A549 (cell line): ENCODE measurements at regions of chrX and their contacts with region 1.

Region 1: GRCh38 chrX:153927922-153928760 is 2.1 kb upstream of the ARHGAP4 start:
- DNase-seq: peak; percentile 98 to 99
- ATAC-seq: peak; percentile 88 to 95
- H3K4me3 ChIP-seq: peak overlapping the region; percentile 84
- H3K27ac ChIP-seq: peak overlapping the region; percentile 96 to 99
- H3K4me1 ChIP-seq: peaks cover 17% of the 10 kb centered on the region
- CTCF ChIP-seq: peak; percentile 26
- EP300 ChIP-seq: no peak
- POLR2A ChIP-seq: peak; percentile 50
- RAD21 ChIP-seq: no peak

Region 2: DNA sequence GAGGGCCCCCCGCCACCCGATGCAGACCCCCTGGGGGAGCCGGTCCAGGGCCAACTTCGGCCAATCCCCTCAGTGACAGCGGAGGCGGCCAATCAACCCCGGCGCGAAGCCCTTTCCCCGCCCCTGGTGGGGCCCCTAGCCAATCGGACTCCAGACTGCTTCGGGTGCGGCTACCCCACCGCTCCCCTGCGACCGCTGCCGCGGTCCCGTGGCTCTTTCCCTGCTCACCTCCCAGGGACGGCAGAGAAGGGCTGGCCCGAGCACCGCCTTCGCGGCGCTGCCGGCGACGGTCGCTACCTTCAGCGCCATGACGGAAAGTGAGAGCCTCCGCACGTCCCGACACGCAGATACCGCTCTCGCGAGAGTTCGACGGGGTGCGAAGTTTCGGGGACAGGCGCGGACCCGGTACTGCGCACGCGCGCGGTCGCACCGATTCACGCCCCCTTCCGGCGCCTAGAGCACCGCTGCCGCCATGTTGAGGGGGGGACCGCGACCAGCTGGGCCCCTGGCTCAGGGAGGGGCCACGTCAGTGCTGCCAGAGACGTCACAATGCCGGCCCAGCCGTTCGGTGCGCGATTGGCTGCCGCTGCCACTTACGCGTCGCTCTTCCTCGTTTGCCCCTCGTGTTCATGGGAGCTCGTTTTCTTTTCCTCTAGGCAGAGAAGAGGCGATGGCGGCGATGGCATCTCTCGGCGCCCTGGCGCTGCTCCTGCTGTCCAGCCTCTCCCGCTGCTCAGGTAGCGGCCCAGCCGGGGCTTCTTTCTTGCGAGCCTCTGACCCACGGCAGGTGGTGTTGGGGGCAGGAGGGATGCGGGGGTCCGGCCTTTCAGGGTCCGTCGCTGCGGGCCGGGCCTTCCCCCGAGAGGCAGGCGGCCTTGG is 133.9 kb before region 1 on chrX and contains the starts of genes IDH3G and SSR4:
- CTCF ChIA-PET with region 1: no interaction called
- POLR2A ChIA-PET with region 1: interaction called, 12 read pairs
- DNase-seq: peak; percentile 96 to 97
- ATAC-seq: peak; percentile 92 to 95
- H3K4me3 ChIP-seq: peak within 1 kb of the TSS; percentile 79
- H3K27ac ChIP-seq: peak within 1 kb of the TSS; percentile 92 to 98
- H3K4me1 ChIP-seq: peaks cover 15% of the 10 kb centered on the region; the same call in 2 of the 3 replicates
- CTCF ChIP-seq: no peak
- EP300 ChIP-seq: no peak
- POLR2A ChIP-seq: peak; percentile 64
- RAD21 ChIP-seq: no peak
- polyA plus RNA-seq, gene IDH3G: 45.6 and 50.7 TPM in 2 replicates
- polyA plus RNA-seq, gene SSR4: 212 and 293 TPM in 2 replicates

Region 3: GRCh38 chrX:153909024-153909970 is 18.8 kb before region 1 on chrX:
- CTCF ChIA-PET with region 1: interaction called, 56 read pairs
- POLR2A ChIA-PET with region 1: interaction called, 5 read pairs
- DNase-seq: no peak
- ATAC-seq: peak; percentile 32 to 75; a peak in 3 of 6 replicates
- H3K4me3 ChIP-seq: no peak overlapping the region
- H3K27ac ChIP-seq: no peak overlapping the region
- H3K4me1 ChIP-seq: no peaks in the 10 kb centered on the region
- CTCF ChIP-seq: no peak
- EP300 ChIP-seq: no peak
- POLR2A ChIP-seq: no peak
- RAD21 ChIP-seq: no peak